ENCODE measurements at regions of chr10 and their contacts with region 1.

Region 1: DNA sequence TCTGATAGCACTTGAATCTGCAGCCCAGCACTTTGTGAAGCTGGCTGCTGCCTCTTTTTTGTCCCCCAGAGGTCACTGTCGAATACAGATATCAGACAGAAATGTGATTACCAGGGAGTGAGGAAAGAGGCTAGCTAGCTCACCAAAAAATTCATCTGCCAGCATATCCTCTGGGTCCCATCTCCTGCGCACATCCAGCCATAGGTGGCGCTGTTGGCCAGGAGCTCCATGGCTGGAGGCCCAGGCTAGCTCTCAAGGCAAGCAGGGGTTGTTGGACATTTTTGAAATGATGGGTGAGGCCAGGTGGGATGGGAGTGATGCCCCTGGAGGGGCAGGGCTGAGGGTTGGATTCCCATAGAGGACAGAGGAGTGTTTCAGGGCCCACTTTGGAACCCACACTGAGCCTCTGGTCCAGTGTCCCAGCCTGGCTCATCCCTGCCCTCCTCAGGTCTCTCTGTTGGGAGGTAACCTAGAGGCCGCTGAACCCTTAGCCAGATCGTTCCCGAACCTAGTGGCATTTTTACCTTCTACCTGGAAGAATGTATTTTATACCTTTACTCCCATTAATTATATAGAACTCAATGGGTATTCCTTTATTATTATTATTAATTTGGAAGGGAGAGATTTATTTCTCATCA is 14.8 kb downstream of the DPCD start:
- DNase-seq: peak; percentile 79 to 86
- ATAC-seq: peak; percentile 88 to 98
- H3K4me3 ChIP-seq: no peak overlapping the region
- H3K27ac ChIP-seq: no peak overlapping the region
- H3K4me1 ChIP-seq: no peaks in the 10 kb centered on the region
- CTCF ChIP-seq: peak; percentile 78
- EP300 ChIP-seq: no peak
- POLR2A ChIP-seq: no peak
- RAD21 ChIP-seq: peak; percentile 72 to 76

Region 2: GRCh38 chr10:101587725-101588653 is 14.9 kb before region 1 on chr10 and contains the starts of genes DPCD and POLL:
- CTCF ChIA-PET with region 1: interaction called, 11 read pairs
- POLR2A ChIA-PET with region 1: no interaction called
- DNase-seq: peak; percentile 90 to 99
- ATAC-seq: peak; percentile 97 to 98
- H3K4me3 ChIP-seq: peak within 1 kb of the TSS; percentile 69
- H3K27ac ChIP-seq: peak within 1 kb of the TSS; percentile 85 to 96
- H3K4me1 ChIP-seq: peaks cover 15% of the 10 kb centered on the region
- CTCF ChIP-seq: no peak
- EP300 ChIP-seq: no peak
- POLR2A ChIP-seq: peak; percentile 48; the same call in 1 of the 2 replicates
- RAD21 ChIP-seq: no peak
- polyA plus RNA-seq, gene DPCD: 39.7 and 40.8 TPM in 2 replicates
- polyA plus RNA-seq, gene POLL: 16.7 and 18.1 TPM in 2 replicates

Region 3: DNA sequence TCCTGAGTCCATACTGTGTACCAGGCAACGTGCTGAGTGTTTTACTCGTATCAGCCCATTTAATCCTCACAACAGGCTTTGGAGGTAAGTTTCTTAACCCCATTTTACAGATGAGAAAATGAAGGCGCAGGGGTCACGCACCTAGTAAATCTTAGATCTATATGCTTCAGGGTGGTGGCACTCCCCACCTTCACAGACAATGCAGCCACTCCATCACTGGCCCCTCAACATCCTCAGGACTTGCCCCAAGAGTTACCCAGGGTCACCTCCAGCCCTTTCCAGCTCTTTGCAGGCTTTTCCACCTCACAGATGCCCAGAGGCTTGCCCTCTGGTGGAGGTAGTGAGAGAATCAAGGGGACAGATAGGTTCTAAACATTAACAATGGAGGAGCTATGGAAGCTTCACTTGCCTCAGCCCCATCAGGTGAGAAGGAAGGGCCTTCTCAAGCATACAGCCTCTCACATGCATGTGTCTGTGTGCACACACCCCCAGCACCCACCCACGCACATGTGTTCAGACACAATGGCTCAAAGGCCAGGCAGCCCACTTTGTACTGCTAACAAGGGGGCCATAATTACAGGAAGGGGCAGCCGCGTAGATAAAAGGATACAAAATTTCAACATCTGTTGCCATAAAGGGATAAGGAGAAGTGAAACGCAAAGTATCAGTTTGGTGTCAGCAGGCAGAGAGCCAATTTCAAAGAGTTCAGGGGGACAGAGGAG is 14.4 kb after region 1 on chr10:
- CTCF ChIA-PET with region 1: interaction called, 19 read pairs
- POLR2A ChIA-PET with region 1: no interaction called
- DNase-seq: peak in 1 of 2 experiments; percentile 24
- ATAC-seq: peak; percentile 45 to 56; a peak in 3 of 6 replicates
- H3K4me3 ChIP-seq: no peak overlapping the region
- H3K27ac ChIP-seq: no peak overlapping the region
- H3K4me1 ChIP-seq: no peaks in the 10 kb centered on the region
- CTCF ChIP-seq: no peak
- EP300 ChIP-seq: no peak
- POLR2A ChIP-seq: no peak
- RAD21 ChIP-seq: no peak